ENCODE measurements at regions of chr1 and their contacts with region 1.

Region 1: DNA sequence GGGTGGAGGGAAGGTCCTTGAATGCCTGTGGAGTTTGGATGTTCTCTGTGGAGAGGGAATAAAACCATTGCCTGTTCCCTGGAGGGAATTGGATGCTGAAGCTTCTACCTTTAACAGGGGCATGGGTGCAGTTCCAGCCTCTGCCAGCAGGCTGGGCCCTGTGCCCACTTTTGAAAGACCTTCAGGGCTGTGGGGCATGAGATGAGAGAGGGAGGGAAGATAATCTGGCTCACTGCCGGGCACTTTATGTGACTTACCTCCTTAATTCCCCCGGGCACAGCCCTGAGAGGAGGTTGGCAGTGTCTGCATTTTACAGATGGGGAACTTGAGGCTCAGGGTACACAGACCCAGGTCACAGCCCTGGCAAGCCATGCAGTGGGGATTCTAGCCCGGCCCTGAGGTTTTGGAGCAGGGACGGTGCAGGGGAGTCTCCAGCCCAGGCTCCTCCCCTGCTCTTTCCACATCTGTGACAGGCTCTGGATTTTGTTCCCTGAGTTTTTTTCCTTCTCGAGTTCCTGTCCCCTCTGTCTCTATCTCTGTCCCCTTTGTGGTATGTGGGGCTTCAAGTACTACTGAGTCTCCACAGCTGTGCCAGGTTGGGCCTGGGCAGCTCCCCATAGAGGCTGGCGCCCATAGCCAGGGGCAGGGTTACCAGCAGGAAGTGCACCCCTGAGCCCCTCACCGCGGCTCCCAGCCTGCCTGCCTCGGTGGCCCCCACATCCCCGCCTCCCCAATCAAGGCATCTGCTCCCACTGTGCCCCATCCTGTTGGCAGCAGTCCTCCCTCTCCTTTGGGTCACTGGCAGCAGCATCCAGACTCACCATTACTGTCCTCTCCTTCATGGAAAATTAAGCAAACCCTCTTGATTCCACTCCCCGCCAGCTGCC is 14.0 kb upstream of the THEMIS2 start:
- DNase-seq: peak; percentile 91
- H3K4me3 Mint-ChIP-seq: peak overlapping the region; percentile 38
- H3K27ac Mint-ChIP-seq: peak overlapping the region; percentile 84
- H3K4me1 Mint-ChIP-seq: peaks cover 23% of the 10 kb centered on the region
- H3K27me3 Mint-ChIP-seq: no peaks in the 10 kb centered on the region
- CTCF ChIP-seq: peak; percentile 97

Region 2: DNA sequence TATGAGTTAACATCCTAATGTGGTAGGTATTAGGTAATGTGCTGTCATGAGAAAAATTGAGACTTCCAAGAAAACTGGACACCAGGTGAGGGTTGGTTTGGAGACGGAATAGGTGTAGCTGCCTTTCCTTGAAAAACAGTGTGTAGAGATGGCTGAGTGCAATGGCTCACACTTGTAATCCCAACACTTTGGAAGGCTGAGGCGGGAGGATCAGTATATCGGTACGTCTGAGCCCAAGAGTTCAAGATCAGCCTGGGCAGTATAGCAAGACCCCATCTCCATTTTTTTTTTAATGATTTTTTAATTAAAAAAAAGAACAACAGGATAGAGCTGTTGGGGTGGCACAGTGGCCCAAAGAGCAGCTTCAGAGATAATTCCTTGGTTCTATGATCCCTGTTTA is 34.5 kb before region 1 on chr1:
- CTCF ChIA-PET with region 1: no interaction called
- POLR2A ChIA-PET with region 1: no interaction called
- intact Hi-C with region 1: no loop called
- DNase-seq: no peak
- H3K4me3 Mint-ChIP-seq: no peak overlapping the region
- H3K27ac Mint-ChIP-seq: no peak overlapping the region
- H3K4me1 Mint-ChIP-seq: no peaks in the 10 kb centered on the region
- H3K27me3 Mint-ChIP-seq: no peaks in the 10 kb centered on the region
- CTCF ChIP-seq: no peak

Region 3: DNA sequence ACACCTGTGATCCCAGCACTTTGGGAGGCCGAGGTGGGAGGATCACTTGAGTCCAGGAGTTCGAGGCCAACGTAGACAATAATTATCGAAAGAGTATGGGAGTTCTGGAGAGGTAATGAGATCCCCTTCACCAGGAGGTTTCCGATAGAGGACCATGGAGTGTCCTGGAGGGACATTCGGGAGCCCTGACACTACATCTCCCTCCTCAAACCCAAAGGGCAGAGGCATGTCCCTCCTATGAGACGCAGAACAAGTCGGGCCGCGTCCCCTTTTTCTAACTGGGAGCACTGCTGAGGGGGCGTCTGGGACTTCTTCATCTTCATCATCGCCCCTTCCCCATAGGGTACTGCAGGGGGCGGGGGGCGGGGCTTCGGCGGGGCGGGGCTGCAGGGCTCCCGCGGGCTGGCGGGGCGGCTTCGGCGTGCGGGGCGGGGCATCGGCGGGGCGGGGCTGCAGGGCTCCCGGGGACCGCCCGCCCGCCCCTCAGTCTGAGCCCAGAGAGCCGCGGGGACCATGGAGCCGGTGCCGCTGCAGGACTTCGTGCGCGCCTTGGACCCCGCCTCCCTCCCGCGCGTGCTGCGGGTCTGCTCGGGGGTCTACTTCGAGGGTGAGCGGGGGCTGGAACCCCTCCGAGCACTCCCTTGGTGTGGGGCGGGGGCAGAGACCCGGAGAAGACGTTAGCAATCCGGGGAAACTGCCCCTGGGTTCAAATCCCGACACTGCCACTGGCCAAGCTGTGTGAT is 13.9 kb after region 1 on chr1 and contains the start of gene THEMIS2:
- CTCF ChIA-PET with region 1: interaction called, 3 read pairs
- POLR2A ChIA-PET with region 1: interaction called, 11 read pairs
- intact Hi-C with region 1: no loop called
- DNase-seq: peak; percentile 53
- H3K4me3 Mint-ChIP-seq: peak within 1 kb of the TSS; percentile 63
- H3K27ac Mint-ChIP-seq: peak within 1 kb of the TSS; percentile 32
- H3K4me1 Mint-ChIP-seq: peaks cover 9% of the 10 kb centered on the region
- H3K27me3 Mint-ChIP-seq: no peaks in the 10 kb centered on the region
- CTCF ChIP-seq: no peak
- total RNA-seq, gene THEMIS2: 1.5 and 1.7 TPM in 2 replicates

Region 4: GRCh38 chr1:27885114-27885528 is 26.8 kb after region 1 on chr1:
- CTCF ChIA-PET with region 1: no interaction called
- POLR2A ChIA-PET with region 1: no interaction called
- intact Hi-C with region 1: no loop called
- DNase-seq: no peak
- H3K4me3 Mint-ChIP-seq: no peak overlapping the region
- H3K27ac Mint-ChIP-seq: no peak overlapping the region
- H3K4me1 Mint-ChIP-seq: no peaks in the 10 kb centered on the region
- H3K27me3 Mint-ChIP-seq: no peaks in the 10 kb centered on the region
- CTCF ChIP-seq: no peak

Region 5: DNA sequence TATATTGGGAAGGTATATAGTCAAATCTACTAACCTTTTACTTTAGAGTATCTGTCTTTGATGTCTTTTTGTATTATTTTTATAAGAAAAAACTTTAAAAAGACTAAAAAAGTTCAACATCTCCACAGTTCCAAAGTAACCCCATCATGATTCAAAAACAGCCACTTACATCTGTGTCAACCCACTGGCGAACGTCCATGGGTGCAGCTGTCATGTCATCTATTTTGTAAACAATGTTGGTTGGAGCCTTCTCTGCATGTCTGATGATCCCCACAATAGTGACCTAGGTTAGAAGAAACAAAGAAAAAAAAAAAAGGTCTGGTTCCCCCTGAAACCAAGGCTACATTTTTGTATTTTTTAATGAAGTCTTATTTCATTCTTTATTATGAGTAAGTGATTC is 48.4 kb after region 1 on chr1:
- CTCF ChIA-PET with region 1: no interaction called
- POLR2A ChIA-PET with region 1: interaction called, 3 read pairs
- intact Hi-C with region 1: loop called (anchors 2 kb)
- DNase-seq: no peak
- H3K4me3 Mint-ChIP-seq: no peak overlapping the region
- H3K27ac Mint-ChIP-seq: no peak overlapping the region
- H3K4me1 Mint-ChIP-seq: no peaks in the 10 kb centered on the region
- H3K27me3 Mint-ChIP-seq: no peaks in the 10 kb centered on the region
- CTCF ChIP-seq: no peak

Region 6: GRCh38 chr1:27959400-27960217 is 101.3 kb after region 1 on chr1 and contains the start of gene XKR8:
- CTCF ChIA-PET with region 1: interaction called, 3 read pairs
- POLR2A ChIA-PET with region 1: interaction called, 4 read pairs
- intact Hi-C with region 1: loop called (anchors 5 kb)
- DNase-seq: peak; percentile 89
- H3K4me3 Mint-ChIP-seq: peak within 1 kb of the TSS; percentile 79
- H3K27ac Mint-ChIP-seq: peak within 1 kb of the TSS; percentile 93
- H3K4me1 Mint-ChIP-seq: peaks cover 15% of the 10 kb centered on the region
- H3K27me3 Mint-ChIP-seq: no peaks in the 10 kb centered on the region
- CTCF ChIP-seq: peak; percentile 38
- total RNA-seq, gene XKR8: 2.8 and 4.0 TPM in 2 replicates

Region 7: GRCh38 chr1:27970401-27970800 is 112.1 kb after region 1 on chr1:
- CTCF ChIA-PET with region 1: interaction called, 74 read pairs
- POLR2A ChIA-PET with region 1: interaction called, 4 read pairs
- intact Hi-C with region 1: no loop called
- DNase-seq: no peak
- H3K4me3 Mint-ChIP-seq: no peak overlapping the region
- H3K27ac Mint-ChIP-seq: no peak overlapping the region
- H3K4me1 Mint-ChIP-seq: peaks cover 31% of the 10 kb centered on the region
- H3K27me3 Mint-ChIP-seq: no peaks in the 10 kb centered on the region
- CTCF ChIP-seq: no peak

Region 8: DNA sequence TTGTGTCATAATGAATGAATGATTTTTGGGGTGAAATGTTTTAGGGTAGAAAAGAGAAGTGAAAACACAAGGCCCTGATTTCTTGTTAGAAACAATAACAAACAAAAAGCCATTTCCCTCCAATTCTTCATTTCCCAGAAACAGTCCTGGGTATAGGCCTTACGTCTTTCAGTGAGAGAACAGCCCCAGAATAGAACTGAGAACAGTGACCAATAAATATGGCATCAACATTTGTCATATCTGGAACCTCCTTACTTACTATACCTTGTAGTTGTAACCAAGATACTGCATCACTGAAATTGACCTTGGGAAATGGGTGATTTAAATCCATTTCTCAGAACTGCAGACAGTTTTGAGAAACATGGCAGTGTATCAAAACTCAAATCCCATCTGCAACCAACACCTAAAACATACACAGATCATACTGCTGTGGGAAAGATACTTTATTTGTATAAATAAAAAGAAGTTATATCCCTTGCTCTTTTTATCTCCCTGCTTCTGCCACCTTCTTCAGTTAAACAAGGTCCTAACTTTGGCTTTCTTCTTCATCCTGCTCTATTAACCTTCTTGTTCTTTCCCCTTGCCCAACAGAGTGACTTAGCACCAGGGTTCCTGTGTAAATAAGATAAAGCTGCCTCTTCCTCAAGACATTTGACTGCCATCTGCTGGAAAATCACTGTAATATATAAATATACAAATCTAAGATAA is 121.0 kb after region 1 on chr1:
- CTCF ChIA-PET with region 1: interaction called, 74 read pairs
- POLR2A ChIA-PET with region 1: interaction called, 10 read pairs
- intact Hi-C with region 1: loop called (anchors 2 kb)
- DNase-seq: peak; percentile 66
- H3K4me3 Mint-ChIP-seq: no peak overlapping the region
- H3K27ac Mint-ChIP-seq: no peak overlapping the region
- H3K4me1 Mint-ChIP-seq: no peaks in the 10 kb centered on the region
- H3K27me3 Mint-ChIP-seq: no peaks in the 10 kb centered on the region
- CTCF ChIP-seq: peak; percentile 39

Region 9: GRCh38 chr1:28208818-28209441 is 350.6 kb after region 1 on chr1:
- CTCF ChIA-PET with region 1: interaction called, 3 read pairs
- POLR2A ChIA-PET with region 1: no interaction called
- intact Hi-C with region 1: loop called (anchors 5 kb)
- DNase-seq: peak; percentile 78
- H3K4me3 Mint-ChIP-seq: no peak overlapping the region
- H3K27ac Mint-ChIP-seq: no peak overlapping the region
- H3K4me1 Mint-ChIP-seq: peaks cover 9% of the 10 kb centered on the region
- H3K27me3 Mint-ChIP-seq: no peaks in the 10 kb centered on the region
- CTCF ChIP-seq: peak; percentile 80

Measured in MCF 10A (cell line).